Left ventricle myocardium superior (tissue), 1 donor: ENCODE measurements at regions of chr16 and their contacts with region 1.

Region 1: GRCh38 chr16:47460711-47461597 is at the starts of genes ITFG1 and PHKB:
- DNase-seq: peak; percentile 97
- ATAC-seq: peak; percentile 96
- total RNA-seq, gene ITFG1: 64.5 TPM
- total RNA-seq, gene PHKB: 71.0 TPM

Region 2: GRCh38 chr16:47523342-47524006 is 62.5 kb after region 1 on chr16:
- intact Hi-C with region 1: loop called (anchors 5 kb)
- DNase-seq: no peak
- ATAC-seq: no peak